Left cardiac atrium (tissue), 4 donors: ENCODE measurements at regions of chr5 and their contacts with region 1.

Region 1: GRCh38 chr5:147216552-147217154 is 18.2 kb upstream of the STK32A start:
- DNase-seq: no peak
- ATAC-seq: no peak

Region 2: GRCh38 chr5:147586832-147587231 is 370.2 kb after region 1 on chr5:
- intact Hi-C with region 1: loop called in 1 of 2 experiments (anchors 5 kb)
- DNase-seq: no peak
- ATAC-seq: no peak